CD4-positive, alpha-beta T cell (primary cell): ENCODE measurements at regions of chr14 and their contacts with region 1.

Region 1: DNA sequence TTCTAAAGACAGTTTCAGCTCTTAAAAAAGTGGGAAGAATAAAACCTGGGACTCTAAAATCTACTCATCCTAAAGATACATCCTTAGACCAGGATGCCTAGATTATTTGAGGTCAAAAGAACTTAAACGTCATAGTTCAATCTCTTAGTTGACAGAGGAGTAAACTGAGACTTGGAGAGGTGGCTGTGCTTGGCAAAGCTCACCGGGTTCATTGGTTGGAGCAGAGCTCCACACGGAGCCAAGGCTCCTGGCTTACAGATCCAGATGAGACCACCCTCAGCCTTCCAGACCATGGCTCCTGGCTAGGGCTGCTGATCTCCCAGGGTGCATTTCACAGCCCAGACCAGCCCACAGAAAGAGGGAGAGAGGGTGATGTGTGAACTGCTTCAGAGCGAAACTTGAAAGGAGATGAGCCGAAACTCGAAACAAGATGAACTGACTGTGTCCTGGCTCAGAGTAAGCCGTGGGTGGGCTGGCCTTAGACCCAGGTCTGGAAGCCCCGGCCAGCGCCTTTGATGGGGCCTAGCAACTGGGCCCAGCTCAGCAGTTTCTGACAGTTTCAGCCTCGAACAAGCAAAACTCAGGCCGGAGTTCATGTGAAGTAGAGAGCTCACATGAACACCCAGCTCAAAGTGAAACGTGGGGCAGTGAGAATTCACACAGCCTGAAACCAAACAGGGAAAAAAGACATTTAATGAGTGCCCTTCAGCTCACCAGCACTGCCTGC is 1044.8 kb downstream of the BCL11B start:
- DNase-seq: peak in 5 of 14 experiments; percentile 13 to 56 (median 48)
- ATAC-seq: no peak
- H3K4me3 ChIP-seq: no peak overlapping the region
- H3K4me3 Mint-ChIP-seq: peak overlapping the region; percentile 61
- H3K27ac ChIP-seq: peak overlapping the region; percentile 65
- H3K27ac Mint-ChIP-seq: peak overlapping the region; percentile 96
- H3K4me1 ChIP-seq: peaks cover 84% of the 10 kb centered on the region
- H3K4me1 Mint-ChIP-seq: peaks cover 94% of the 10 kb centered on the region
- H3K27me3 ChIP-seq: no peaks in the 10 kb centered on the region
- H3K27me3 Mint-ChIP-seq: no peaks in the 10 kb centered on the region
- CTCF ChIP-seq: no peak

Region 2: DNA sequence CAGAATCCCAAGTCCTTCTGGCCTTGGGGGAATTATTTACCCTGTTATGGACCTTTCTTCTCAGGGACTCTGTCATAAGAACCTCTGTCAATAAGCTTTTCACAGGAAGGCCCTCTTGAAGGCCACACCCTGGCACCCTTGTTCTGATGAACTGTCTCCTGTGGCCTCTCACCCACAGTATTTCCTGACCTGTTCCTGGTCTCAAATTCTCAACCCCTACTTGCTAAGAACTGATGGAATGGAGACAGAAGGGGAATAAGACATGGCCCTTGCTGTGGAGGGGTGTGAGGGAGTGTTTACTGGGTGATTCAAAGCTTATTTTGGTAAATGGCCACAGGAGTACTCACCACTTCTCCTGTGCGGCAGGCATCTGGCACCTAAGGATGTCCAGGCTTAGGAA is 38.1 kb before region 1 on chr14:
- CTCF ChIA-PET with region 1: no interaction called
- POLR2A ChIA-PET with region 1: interaction called, 17 read pairs
- intact Hi-C with region 1: loop called (anchors 2 to 5 kb)
- DNase-seq: peak in 5 of 14 experiments; percentile 51 to 85 (median 55)
- ATAC-seq: peak; percentile 31
- H3K4me3 ChIP-seq: peak overlapping the region; percentile 24
- H3K4me3 Mint-ChIP-seq: peak overlapping the region; percentile 80
- H3K27ac ChIP-seq: peak overlapping the region; percentile 76 to 87
- H3K27ac Mint-ChIP-seq: peak overlapping the region; percentile 93
- H3K4me1 ChIP-seq: peaks cover 92% of the 10 kb centered on the region
- H3K4me1 Mint-ChIP-seq: peaks cover 100% of the 10 kb centered on the region
- H3K27me3 ChIP-seq: no peaks in the 10 kb centered on the region
- H3K27me3 Mint-ChIP-seq: no peaks in the 10 kb centered on the region
- CTCF ChIP-seq: no peak

Region 3: DNA sequence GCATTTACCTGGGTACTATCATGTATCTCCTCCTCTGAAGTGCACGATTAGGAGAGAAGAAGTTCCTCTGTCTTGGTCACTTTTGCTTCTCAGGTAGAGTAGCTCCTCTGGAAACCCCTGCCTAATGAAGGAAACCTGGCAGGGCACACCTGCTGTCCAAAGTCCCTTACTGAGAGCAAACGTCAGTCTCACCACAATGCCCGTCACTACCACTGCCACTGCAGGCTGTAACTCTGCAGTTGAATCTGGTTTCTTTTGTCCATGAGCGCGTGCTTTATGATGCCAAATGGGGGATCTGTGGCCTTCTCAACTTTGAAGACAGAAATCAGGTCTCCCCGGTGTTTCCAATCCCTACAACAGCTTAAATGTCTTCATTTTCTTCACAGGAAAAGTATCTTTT is 23.7 kb before region 1 on chr14:
- CTCF ChIA-PET with region 1: interaction called, 3 read pairs
- POLR2A ChIA-PET with region 1: interaction called, 25 read pairs
- intact Hi-C with region 1: loop called in 1 of 2 experiments (anchors 2 kb)
- DNase-seq: peak in 3 of 14 experiments; percentile 25 to 53 (median 45)
- ATAC-seq: peak; percentile 62
- H3K4me3 ChIP-seq: peak overlapping the region; percentile 44
- H3K4me3 Mint-ChIP-seq: peak overlapping the region; percentile 82
- H3K27ac ChIP-seq: peak overlapping the region in 1 of 2 donors; percentile 18
- H3K27ac Mint-ChIP-seq: peak overlapping the region; percentile 93
- H3K4me1 ChIP-seq: peaks cover 63% of the 10 kb centered on the region
- H3K4me1 Mint-ChIP-seq: peaks cover 99% of the 10 kb centered on the region
- H3K27me3 ChIP-seq: no peaks in the 10 kb centered on the region
- H3K27me3 Mint-ChIP-seq: no peaks in the 10 kb centered on the region
- CTCF ChIP-seq: no peak

Region 4: DNA sequence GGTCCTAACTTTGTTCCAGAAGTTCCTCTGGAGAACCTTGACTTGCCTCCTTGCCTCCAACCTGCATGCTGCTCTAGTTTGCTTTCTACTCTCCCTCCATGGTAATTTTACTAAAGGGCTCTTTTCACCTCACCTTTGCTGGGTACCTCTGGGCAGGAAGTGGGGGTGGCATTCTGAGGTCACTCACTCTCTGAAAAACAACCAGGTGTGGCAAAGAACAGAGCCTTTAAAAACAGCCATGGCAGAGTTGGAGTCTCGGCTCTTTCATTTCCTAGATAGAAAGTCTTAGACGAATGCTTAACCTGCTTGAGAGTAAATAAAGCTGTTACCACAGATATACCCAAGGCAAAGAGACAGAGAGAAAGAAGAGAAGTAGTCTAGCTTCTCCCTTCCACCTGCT is 216.9 kb after region 1 on chr14:
- CTCF ChIA-PET with region 1: no interaction called
- POLR2A ChIA-PET with region 1: interaction called, 3 read pairs
- intact Hi-C with region 1: loop called in 1 of 2 experiments (anchors 10 kb)
- DNase-seq: peak; percentile 27 to 82 (median 48)
- ATAC-seq: peak; percentile 97
- H3K4me3 ChIP-seq: no peak overlapping the region
- H3K4me3 Mint-ChIP-seq: peak overlapping the region; percentile 79
- H3K27ac ChIP-seq: peak overlapping the region; percentile 75 to 81
- H3K27ac Mint-ChIP-seq: no peak overlapping the region
- H3K4me1 ChIP-seq: peaks cover 28% of the 10 kb centered on the region
- H3K4me1 Mint-ChIP-seq: peaks cover 57% of the 10 kb centered on the region
- H3K27me3 ChIP-seq: no peaks in the 10 kb centered on the region
- H3K27me3 Mint-ChIP-seq: no peaks in the 10 kb centered on the region
- CTCF ChIP-seq: no peak